ENCODE measurements at regions of chr3 and their contacts with region 1.

Region 1: GRCh38 chr3:69324362-69325025 is 61.4 kb downstream of the FRMD4B start:
- DNase-seq: no peak
- H3K4me3 ChIP-seq: no peak overlapping the region
- H3K27ac ChIP-seq: peak overlapping the region; percentile 10
- H3K4me1 ChIP-seq: peaks cover 39% of the 10 kb centered on the region
- H3K27me3 ChIP-seq: no peaks in the 10 kb centered on the region
- CTCF ChIP-seq: peak; percentile 66

Region 2: GRCh38 chr3:69379661-69380060 is 55.2 kb after region 1 on chr3:
- intact Hi-C with region 1: no loop called
- DNase-seq: no peak
- H3K4me3 ChIP-seq: no peak overlapping the region
- H3K27ac ChIP-seq: no peak overlapping the region
- H3K4me1 ChIP-seq: peaks cover 14% of the 10 kb centered on the region
- H3K27me3 ChIP-seq: no peaks in the 10 kb centered on the region
- CTCF ChIP-seq: no peak

Region 3: DNA sequence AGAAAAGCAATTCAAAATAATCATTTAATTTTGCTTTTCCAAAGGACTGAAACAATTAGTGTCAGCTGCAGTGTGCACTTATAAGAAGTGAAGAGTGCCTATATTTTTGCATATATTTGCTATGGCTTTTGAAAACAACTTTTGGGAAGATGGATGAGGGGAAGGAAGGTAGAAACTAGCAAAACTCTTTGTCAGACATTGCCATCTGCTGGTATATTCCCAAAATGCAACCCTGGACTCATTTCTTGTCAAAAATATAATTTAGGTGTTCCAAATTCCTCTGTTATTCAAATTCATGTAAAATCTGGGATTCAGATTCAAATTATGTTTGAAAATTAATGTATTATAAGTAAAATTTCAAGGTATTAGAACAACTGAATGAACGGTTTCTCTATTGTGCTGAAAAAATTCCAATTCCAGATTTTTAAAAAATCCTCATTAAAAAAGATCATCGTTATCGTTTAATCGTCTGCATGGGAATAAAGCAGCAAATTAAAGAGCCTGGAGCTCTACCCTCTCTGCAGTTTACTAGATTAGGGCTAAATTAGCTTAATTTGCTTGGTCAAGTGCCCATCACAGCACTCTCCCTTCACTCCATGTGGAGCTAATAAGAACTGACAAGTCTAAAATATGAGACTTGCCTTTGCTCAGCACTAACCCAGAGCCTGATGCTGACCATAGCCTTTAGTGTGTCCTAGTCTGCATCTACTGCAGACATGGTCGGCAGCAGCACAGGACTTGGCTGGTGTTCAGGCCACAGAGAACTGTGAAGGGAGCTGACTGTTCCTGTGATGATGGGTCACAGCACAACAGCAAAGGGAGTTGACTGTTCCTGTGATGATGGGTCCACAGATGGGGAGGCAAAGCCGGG is 346.8 kb after region 1 on chr3:
- intact Hi-C with region 1: loop called (anchors 10 kb)
- DNase-seq: peak; percentile 24
- H3K4me3 ChIP-seq: no peak overlapping the region
- H3K27ac ChIP-seq: no peak overlapping the region
- H3K4me1 ChIP-seq: peaks cover 10% of the 10 kb centered on the region
- H3K27me3 ChIP-seq: no peaks in the 10 kb centered on the region
- CTCF ChIP-seq: peak; percentile 87